Mucosa of descending colon (tissue), 3 donors: ENCODE measurements at regions of chr1 and their contacts with region 1.

Region 1: GRCh38 chr1:205485338-205486228 is 18.9 kb upstream of the CDK18 start:
- DNase-seq: peak; percentile 60 to 70 (median 67)
- ATAC-seq: peak; percentile 93
- H3K4me3 ChIP-seq: no peak overlapping the region
- H3K4me1 ChIP-seq: no peaks in the 10 kb centered on the region
- CTCF ChIP-seq: peak; percentile 97

Region 2: GRCh38 chr1:205255941-205256780 is 229.4 kb before region 1 on chr1:
- intact Hi-C with region 1: no loop called
- DNase-seq: peak; percentile 85 to 95 (median 94)
- ATAC-seq: peak; percentile 97
- H3K4me3 ChIP-seq: no peak overlapping the region
- H3K4me1 ChIP-seq: no peaks in the 10 kb centered on the region
- CTCF ChIP-seq: peak; percentile 86

Region 3: GRCh38 chr1:205354259-205354904 is 131.2 kb before region 1 on chr1:
- intact Hi-C with region 1: loop called in 1 of 2 experiments (anchors 5 kb)
- DNase-seq: peak in 1 of 3 donors; percentile 83
- ATAC-seq: peak; percentile 40
- H3K4me3 ChIP-seq: no peak overlapping the region
- H3K4me1 ChIP-seq: peaks cover 13% of the 10 kb centered on the region
- CTCF ChIP-seq: peak; percentile 78

Region 4: GRCh38 chr1:205523891-205524793 is 38.6 kb after region 1 on chr1:
- intact Hi-C with region 1: loop called (anchors 2 to 5 kb)
- DNase-seq: peak in 2 of 3 donors; percentile 88 to 89
- ATAC-seq: peak; percentile 65
- H3K4me3 ChIP-seq: no peak overlapping the region
- H3K4me1 ChIP-seq: peaks cover 8% of the 10 kb centered on the region
- CTCF ChIP-seq: peak; percentile 58